ENCODE measurements at regions of chr3 and their contacts with region 1.

Region 1: GRCh38 chr3:47176582-47176981 is 12.7 kb upstream of the SETD2 start:
- DNase-seq: no peak
- H3K4me3 ChIP-seq: no peak overlapping the region
- H3K27ac ChIP-seq: no peak overlapping the region
- H3K4me1 ChIP-seq: no peaks in the 10 kb centered on the region
- H3K27me3 ChIP-seq: no peaks in the 10 kb centered on the region
- CTCF ChIP-seq: no peak

Region 2: DNA sequence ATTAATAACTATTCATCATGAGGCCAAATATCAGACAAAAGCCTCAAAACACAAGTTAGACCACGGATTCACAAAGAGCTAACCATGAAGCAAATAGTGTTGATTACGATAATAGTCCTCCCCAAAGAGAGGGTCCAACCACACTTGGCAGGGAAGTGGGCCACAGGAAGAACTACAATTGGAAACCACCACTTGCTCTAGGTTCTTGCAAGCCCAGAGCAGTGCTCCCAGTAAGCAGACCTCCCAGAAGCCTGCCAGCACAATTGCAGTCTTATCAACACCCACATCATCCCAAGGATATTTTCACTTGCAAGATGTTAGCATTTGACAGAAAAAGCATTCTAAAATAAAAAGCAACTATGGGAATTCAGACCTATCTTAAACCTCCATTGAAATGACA is 24.0 kb before region 1 on chr3:
- CTCF ChIA-PET with region 1: interaction called, 29 read pairs
- POLR2A ChIA-PET with region 1: no interaction called
- intact Hi-C with region 1: no loop called
- DNase-seq: no peak
- H3K4me3 ChIP-seq: no peak overlapping the region
- H3K27ac ChIP-seq: no peak overlapping the region
- H3K4me1 ChIP-seq: no peaks in the 10 kb centered on the region
- H3K27me3 ChIP-seq: no peaks in the 10 kb centered on the region
- CTCF ChIP-seq: no peak